ENCODE measurements at regions of chr7 and their contacts with region 1.

Region 1: GRCh38 chr7:123865517-123866117 is 20.6 kb downstream of the HYAL4 start:
- DNase-seq: no peak
- ATAC-seq: peak; percentile 58
- H3K4me3 Mint-ChIP-seq: no peak overlapping the region
- H3K27ac Mint-ChIP-seq: no peak overlapping the region
- H3K4me1 Mint-ChIP-seq: no peaks in the 10 kb centered on the region
- H3K27me3 Mint-ChIP-seq: no peaks in the 10 kb centered on the region
- CTCF ChIP-seq: peak; percentile 97

Region 2: DNA sequence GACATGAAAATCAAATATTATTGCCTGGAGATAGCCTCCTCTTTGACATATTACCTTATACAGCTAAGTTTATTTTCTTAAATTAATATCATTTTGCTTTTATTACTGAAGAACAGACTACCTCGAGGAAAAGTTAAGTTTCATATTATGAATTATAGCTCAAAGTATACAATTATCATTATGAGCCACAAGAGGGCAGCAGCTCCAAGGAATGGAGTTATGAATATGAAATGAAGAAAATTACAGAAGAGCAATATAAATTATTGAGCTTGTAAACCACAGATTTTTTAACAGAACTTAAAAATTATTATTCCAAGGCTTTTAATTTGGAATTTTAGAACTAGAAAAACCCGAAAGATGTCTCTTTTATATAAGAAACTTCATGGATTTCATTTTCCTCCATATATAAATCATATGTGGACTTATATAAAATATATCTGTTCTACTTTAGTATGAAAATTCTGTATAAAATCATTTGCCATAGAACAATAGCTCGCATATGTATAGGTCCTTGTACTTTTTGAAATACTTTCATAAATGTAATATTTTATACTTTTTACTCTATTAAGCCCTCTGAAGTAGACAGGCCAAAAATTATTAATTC is 371.3 kb before region 1 on chr7:
- CTCF ChIA-PET with region 1: interaction called, 11 read pairs
- POLR2A ChIA-PET with region 1: no interaction called
- intact Hi-C with region 1: loop called (anchors 1 kb)
- DNase-seq: no peak
- ATAC-seq: peak; percentile 37
- H3K4me3 Mint-ChIP-seq: no peak overlapping the region
- H3K27ac Mint-ChIP-seq: no peak overlapping the region
- H3K4me1 Mint-ChIP-seq: peaks cover 2% of the 10 kb centered on the region
- H3K27me3 Mint-ChIP-seq: peaks cover 11% of the 10 kb centered on the region
- CTCF ChIP-seq: peak; percentile 90

Region 3: GRCh38 chr7:123635551-123636359 is 229.9 kb before region 1 on chr7:
- CTCF ChIA-PET with region 1: interaction called, 6 read pairs
- POLR2A ChIA-PET with region 1: no interaction called
- intact Hi-C with region 1: loop called (anchors 1 kb)
- DNase-seq: no peak
- ATAC-seq: no peak
- H3K4me3 Mint-ChIP-seq: no peak overlapping the region
- H3K27ac Mint-ChIP-seq: no peak overlapping the region
- H3K4me1 Mint-ChIP-seq: no peaks in the 10 kb centered on the region
- H3K27me3 Mint-ChIP-seq: peaks cover 18% of the 10 kb centered on the region
- CTCF ChIP-seq: no peak

Region 4: DNA sequence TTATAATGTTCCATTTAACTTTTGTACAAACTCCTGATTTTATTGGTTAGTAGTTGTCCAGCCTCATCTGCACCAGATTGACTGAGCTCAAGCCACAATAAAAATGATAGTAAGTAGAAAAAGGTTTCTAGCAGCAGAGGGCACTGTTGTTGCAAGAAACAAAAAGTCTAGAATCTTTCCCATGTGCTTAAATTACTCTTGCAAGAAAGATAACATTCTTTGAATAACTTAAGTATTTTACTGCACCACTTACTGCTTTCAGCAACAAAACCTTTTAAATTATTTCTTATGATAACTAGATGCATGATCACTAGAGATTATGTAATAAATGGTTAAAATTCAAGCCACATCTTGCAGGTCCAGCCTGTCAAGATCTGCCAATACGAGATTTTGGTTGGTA is 182.9 kb before region 1 on chr7:
- CTCF ChIA-PET with region 1: interaction called, 23 read pairs
- POLR2A ChIA-PET with region 1: no interaction called
- intact Hi-C with region 1: loop called (anchors 1 kb)
- DNase-seq: no peak
- ATAC-seq: no peak
- H3K4me3 Mint-ChIP-seq: no peak overlapping the region
- H3K27ac Mint-ChIP-seq: no peak overlapping the region
- H3K4me1 Mint-ChIP-seq: no peaks in the 10 kb centered on the region
- H3K27me3 Mint-ChIP-seq: no peaks in the 10 kb centered on the region
- CTCF ChIP-seq: no peak

Region 5: DNA sequence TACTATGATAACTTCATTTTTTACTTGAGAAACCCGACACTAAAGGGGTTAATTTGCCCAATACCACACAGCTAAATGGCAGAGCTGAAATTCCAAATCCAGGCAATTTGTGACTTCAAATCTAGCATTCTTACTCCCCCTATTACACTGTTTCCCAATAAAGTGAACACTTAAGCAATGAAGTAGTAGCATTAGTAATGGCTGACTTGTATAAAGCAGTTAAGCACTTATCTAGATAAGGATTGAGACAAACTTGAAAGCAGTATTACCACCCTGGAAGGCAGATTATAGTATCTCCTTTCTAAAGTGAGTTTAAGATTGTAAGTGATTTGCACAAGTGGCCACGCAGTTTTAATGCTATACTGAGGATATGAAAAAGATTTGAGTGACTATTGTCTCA is 156.1 kb before region 1 on chr7:
- CTCF ChIA-PET with region 1: no interaction called
- POLR2A ChIA-PET with region 1: no interaction called
- intact Hi-C with region 1: loop called (anchors 5 kb)
- DNase-seq: no peak
- ATAC-seq: no peak
- H3K4me3 Mint-ChIP-seq: no peak overlapping the region
- H3K27ac Mint-ChIP-seq: no peak overlapping the region
- H3K4me1 Mint-ChIP-seq: peaks cover 8% of the 10 kb centered on the region
- H3K27me3 Mint-ChIP-seq: no peaks in the 10 kb centered on the region
- CTCF ChIP-seq: no peak

Region 6: DNA sequence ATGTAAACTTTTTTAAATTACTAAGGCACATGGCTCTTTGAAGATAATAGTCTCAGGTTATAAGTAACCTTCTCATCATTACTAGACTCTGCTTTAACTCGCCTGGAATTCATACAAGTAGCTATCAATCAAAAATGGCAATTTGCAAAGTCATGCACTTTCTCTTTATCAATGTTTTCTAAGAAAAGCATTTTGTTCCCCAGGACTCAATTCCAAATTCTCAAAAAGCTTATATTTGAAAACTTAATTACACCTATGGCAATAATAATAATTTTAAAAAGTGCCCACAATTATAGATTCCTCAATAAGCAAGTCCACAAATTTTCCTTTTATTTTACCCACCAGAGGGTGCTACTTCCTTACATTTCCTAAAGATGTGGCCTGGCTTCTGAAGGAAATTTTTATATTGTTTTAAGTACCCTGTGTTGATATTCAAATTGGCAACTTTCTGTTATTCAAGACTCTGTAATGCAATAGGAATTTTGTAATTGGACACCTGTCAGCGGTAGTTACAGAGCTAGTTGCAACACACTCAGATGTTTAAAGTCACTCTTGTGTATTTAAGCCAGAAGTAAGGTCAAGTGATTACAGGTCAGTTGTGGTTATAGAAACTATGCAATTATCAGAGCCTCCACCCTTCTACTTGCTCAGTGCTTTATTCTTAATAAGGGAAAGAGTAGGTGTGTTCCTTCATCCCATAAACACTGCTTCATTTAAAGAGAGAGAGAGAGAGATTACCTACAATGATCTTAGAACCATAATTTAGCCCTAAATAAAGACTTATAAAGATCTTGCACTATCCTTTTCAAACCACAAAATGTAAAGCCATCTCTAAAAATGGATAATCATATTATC is 67.7 kb before region 1 on chr7:
- CTCF ChIA-PET with region 1: interaction called, 7 read pairs
- POLR2A ChIA-PET with region 1: no interaction called
- intact Hi-C with region 1: loop called (anchors 1 kb)
- DNase-seq: no peak
- ATAC-seq: no peak
- H3K4me3 Mint-ChIP-seq: no peak overlapping the region
- H3K27ac Mint-ChIP-seq: no peak overlapping the region
- H3K4me1 Mint-ChIP-seq: no peaks in the 10 kb centered on the region
- H3K27me3 Mint-ChIP-seq: no peaks in the 10 kb centered on the region
- CTCF ChIP-seq: no peak

Region 7: GRCh38 chr7:124042816-124043215 is 177.2 kb after region 1 on chr7:
- CTCF ChIA-PET with region 1: no interaction called
- POLR2A ChIA-PET with region 1: no interaction called
- intact Hi-C with region 1: no loop called
- DNase-seq: no peak
- ATAC-seq: no peak
- H3K4me3 Mint-ChIP-seq: no peak overlapping the region
- H3K27ac Mint-ChIP-seq: no peak overlapping the region
- H3K4me1 Mint-ChIP-seq: no peaks in the 10 kb centered on the region
- H3K27me3 Mint-ChIP-seq: no peaks in the 10 kb centered on the region
- CTCF ChIP-seq: no peak

Region 8: GRCh38 chr7:124514471-124514870 is 648.9 kb after region 1 on chr7:
- CTCF ChIA-PET with region 1: no interaction called
- POLR2A ChIA-PET with region 1: no interaction called
- intact Hi-C with region 1: no loop called
- DNase-seq: no peak
- ATAC-seq: no peak
- H3K4me3 Mint-ChIP-seq: no peak overlapping the region
- H3K27ac Mint-ChIP-seq: no peak overlapping the region
- H3K4me1 Mint-ChIP-seq: no peaks in the 10 kb centered on the region
- H3K27me3 Mint-ChIP-seq: no peaks in the 10 kb centered on the region
- CTCF ChIP-seq: no peak

Region 9: GRCh38 chr7:124856299-124856888 is 990.8 kb after region 1 on chr7:
- CTCF ChIA-PET with region 1: no interaction called
- POLR2A ChIA-PET with region 1: no interaction called
- intact Hi-C with region 1: loop called (anchors 5 kb)
- DNase-seq: no peak
- ATAC-seq: no peak
- H3K4me3 Mint-ChIP-seq: no peak overlapping the region
- H3K27ac Mint-ChIP-seq: no peak overlapping the region
- H3K4me1 Mint-ChIP-seq: no peaks in the 10 kb centered on the region
- H3K27me3 Mint-ChIP-seq: no peaks in the 10 kb centered on the region
- CTCF ChIP-seq: peak; percentile 42